H1 (cell line): ENCODE measurements at regions of chr13 and their contacts with region 1.

Region 1: DNA sequence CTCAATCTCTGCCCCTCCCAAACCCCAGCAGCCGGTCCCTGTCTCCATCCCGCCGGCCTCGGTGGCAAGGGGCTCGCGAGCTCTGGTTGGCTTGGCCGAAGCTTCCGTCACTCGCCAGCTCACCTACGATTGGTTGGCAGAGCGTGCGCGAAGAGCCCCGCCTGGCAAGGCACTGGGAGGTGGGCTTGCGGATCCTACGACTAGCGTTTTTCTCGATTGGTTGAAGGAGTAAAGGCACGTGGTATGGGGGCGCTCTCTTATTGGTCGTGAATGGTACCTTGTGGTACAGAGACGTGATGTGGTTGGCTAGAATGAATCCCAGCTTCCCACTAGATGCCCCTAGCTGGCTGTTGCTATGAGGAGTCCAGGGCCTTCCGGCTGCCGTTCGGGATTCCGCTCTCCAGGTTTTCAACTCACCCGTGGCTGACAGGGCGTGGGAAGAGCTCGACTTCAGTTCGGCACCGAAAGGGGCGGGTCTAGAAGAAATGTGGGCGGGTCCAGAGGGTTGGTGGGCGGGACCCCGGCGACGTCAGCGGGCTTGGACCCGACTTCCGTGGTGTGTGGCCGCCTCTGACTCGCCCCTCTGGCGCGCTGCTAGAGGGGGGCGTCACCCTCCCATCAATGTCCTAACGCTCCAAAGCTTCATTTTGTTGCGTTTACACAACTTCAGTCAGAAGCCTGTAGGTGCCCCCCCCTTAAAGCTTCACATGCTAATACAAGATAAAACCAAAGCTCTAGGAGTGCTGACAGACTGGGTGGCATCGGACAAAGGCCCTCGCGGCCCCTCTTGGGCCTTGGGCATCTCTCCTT is 847 bp upstream of the RAP2A start:
- DNase-seq: peak; percentile 99 to 100
- H3K4me3 ChIP-seq: peak overlapping the region; percentile 93 to 98 (median 96)
- H3K27ac ChIP-seq: peak overlapping the region; percentile 85
- H3K4me1 ChIP-seq: peaks cover 0 to 3% (median 1%) of the 10 kb centered on the region in 4 experiments; a peak in 3 of 7 replicates
- H3K27me3 ChIP-seq: no peaks in the 10 kb centered on the region
- CTCF ChIP-seq: no peak
- EP300 ChIP-seq: 0 out of 3 replicates have a peak, but pooled peaks of 1 of the 2 experiments have one; percentile 5
- POLR2A ChIP-seq: peak in 1 of 2 experiments; percentile 75; a peak in 1 of 3 replicates
- RAD21 ChIP-seq: 0 out of 4 replicates have a peak, but pooled peaks of 1 of the 2 experiments have one; percentile 4

Region 2: GRCh38 chr13:97417698-97418097 is 15.4 kb before region 1 on chr13:
- CTCF ChIA-PET with region 1: interaction called, 6 read pairs
- POLR2A ChIA-PET with region 1: interaction called, 11 read pairs
- DNase-seq: no peak
- H3K4me3 ChIP-seq: no peak overlapping the region
- H3K27ac ChIP-seq: no peak overlapping the region
- H3K4me1 ChIP-seq: no peaks in the 10 kb centered on the region
- H3K27me3 ChIP-seq: peaks cover 0 to under 1% (median 0%) of the 10 kb centered on the region in 4 experiments; a peak in 1 of 7 replicates
- CTCF ChIP-seq: no peak
- EP300 ChIP-seq: no peak
- POLR2A ChIP-seq: no peak
- RAD21 ChIP-seq: no peak